ENCODE measurements at regions of chr3 and their contacts with region 1.

Region 1: DNA sequence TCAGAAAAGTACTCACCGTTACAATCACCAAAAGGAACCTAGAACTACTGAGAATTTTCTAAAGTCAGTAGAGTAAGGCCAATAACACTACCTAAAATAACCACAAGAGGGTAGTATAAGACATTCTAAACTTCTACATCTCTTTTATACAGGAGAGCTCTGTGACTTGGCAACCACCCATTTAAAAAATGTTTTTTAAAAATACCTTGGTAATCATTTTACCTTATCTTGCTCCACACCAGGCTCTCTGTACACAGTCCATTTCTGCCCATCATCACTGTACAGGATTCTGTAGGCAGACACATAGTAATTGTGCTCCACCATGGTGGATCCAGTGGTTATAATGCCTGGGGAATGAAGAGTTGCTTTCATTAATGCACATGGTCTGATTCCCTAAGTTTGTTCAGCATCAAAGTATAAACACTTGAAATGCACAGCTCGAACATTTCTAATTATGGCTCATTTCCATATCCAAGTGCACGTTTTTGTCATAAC is 54.5 kb downstream of the ST3GAL6 start:
- DNase-seq: peak; percentile 66
- H3K4me3 ChIP-seq: no peak overlapping the region
- H3K27ac ChIP-seq: peak overlapping the region; percentile 34
- H3K4me1 ChIP-seq: peaks cover 8% of the 10 kb centered on the region
- H3K27me3 ChIP-seq: no peaks in the 10 kb centered on the region
- CTCF ChIP-seq: peak; percentile 27 to 34
- POLR2A ChIP-seq: no peak

Region 2: DNA sequence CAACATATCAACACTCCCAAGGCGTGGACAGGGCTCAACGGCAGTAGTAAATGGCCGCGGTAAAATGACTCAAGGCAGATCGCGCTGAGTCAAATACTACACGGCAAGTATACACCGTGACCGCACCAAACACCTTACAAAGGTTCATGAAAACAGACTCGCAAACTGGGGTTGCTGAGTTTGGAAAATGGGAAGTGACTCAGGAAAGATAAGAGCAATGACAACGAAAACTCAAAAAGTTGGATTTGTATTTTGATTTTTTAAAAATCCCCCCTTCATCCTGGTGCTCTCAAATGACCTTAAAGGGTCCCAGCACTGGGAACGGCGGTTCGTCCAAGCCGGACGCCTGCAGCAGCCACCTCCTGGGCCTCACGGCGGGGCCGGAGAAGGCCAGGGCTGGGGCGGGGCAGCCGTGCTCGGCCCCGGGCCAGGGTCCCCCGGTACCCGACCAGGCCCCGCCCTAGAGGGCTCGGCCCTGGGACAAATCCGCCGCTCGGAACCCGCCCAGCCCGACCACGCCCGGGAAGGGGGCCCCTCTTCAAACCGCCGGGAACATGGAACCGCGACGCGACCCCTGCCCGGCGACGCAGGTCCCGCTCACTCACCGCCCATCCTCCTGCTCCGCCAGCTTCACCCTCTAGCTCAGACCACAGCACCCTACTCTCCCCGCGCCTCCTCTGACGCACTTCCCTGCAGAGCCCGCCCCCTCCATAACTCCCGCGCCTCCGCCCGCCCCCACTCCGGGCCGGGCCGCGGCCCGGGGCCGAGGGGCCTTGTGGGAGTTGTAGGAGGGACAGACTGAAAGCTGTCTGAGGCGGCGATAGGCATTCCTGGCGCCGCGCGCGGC is 295.1 kb before region 1 on chr3 and contains the start of gene CLDND1:
- CTCF ChIA-PET with region 1: no interaction called
- POLR2A ChIA-PET with region 1: no interaction called
- dilution Hi-C with region 1: no loop called
- intact Hi-C with region 1: loop called (anchors 5 kb)
- DNase-seq: peak; percentile 98
- H3K4me3 ChIP-seq: peak within 1 kb of the TSS; percentile 86 to 97 (median 94)
- H3K27ac ChIP-seq: peak within 1 kb of the TSS; percentile 94
- H3K4me1 ChIP-seq: peaks cover 13% of the 10 kb centered on the region
- H3K27me3 ChIP-seq: peaks cover 0 to 2% of the 10 kb centered on the region in 2 experiments
- CTCF ChIP-seq: no peak
- POLR2A ChIP-seq: peak; percentile 81
- total RNA-seq, gene CLDND1: 93.1 and 101 TPM in 2 replicates

Region 3: GRCh38 chr3:98593046-98593936 is 224.3 kb before region 1 on chr3 and contains the start of gene CPOX:
- CTCF ChIA-PET with region 1: interaction called, 63 read pairs
- POLR2A ChIA-PET with region 1: no interaction called
- dilution Hi-C with region 1: no loop called
- intact Hi-C with region 1: no loop called
- DNase-seq: peak; percentile 89
- H3K4me3 ChIP-seq: peak within 1 kb of the TSS; percentile 52 to 94 (median 76)
- H3K27ac ChIP-seq: peak within 1 kb of the TSS; percentile 49
- H3K4me1 ChIP-seq: peaks cover 10% of the 10 kb centered on the region
- H3K27me3 ChIP-seq: no peaks in the 10 kb centered on the region
- CTCF ChIP-seq: no peak
- POLR2A ChIP-seq: peak; percentile 44
- total RNA-seq, gene CPOX: 19.9 and 24.5 TPM in 2 replicates

Region 4: GRCh38 chr3:98893740-98894139 is 76.1 kb after region 1 on chr3:
- CTCF ChIA-PET with region 1: interaction called, 10 read pairs
- POLR2A ChIA-PET with region 1: no interaction called
- dilution Hi-C with region 1: no loop called
- intact Hi-C with region 1: no loop called
- DNase-seq: no peak
- H3K4me3 ChIP-seq: no peak overlapping the region
- H3K27ac ChIP-seq: no peak overlapping the region
- H3K4me1 ChIP-seq: peaks cover 51% of the 10 kb centered on the region
- H3K27me3 ChIP-seq: no peaks in the 10 kb centered on the region
- CTCF ChIP-seq: no peak
- POLR2A ChIP-seq: no peak

Region 5: DNA sequence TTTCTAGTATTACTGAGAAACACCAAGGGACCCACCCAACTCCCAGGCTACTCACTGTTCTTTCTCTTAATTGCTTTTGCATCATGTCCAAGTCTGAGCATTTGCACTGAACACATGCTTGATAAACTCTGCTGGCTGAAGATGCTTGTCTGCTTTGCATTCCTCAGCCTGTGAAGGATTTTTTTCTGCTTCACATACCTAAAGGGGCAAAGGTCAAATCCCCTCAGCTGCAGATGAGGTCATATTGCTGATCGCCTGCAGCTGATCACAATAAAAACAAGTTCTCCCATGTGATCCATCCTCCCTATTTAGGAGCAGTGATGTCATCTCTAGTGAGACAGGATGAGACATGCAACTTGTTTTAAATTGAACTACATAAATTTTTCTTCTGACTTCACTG is 168.5 kb after region 1 on chr3:
- CTCF ChIA-PET with region 1: interaction called, 361 read pairs
- POLR2A ChIA-PET with region 1: no interaction called
- dilution Hi-C with region 1: no loop called
- intact Hi-C with region 1: no loop called
- DNase-seq: peak; percentile 92
- H3K4me3 ChIP-seq: no peak overlapping the region
- H3K27ac ChIP-seq: peak overlapping the region; percentile 82
- H3K4me1 ChIP-seq: peaks cover 25% of the 10 kb centered on the region
- H3K27me3 ChIP-seq: no peaks in the 10 kb centered on the region
- CTCF ChIP-seq: no peak
- POLR2A ChIP-seq: no peak

Region 6: GRCh38 chr3:99753268-99753975 is 935.8 kb after region 1 on chr3:
- CTCF ChIA-PET with region 1: interaction called, 5 read pairs
- POLR2A ChIA-PET with region 1: no interaction called
- dilution Hi-C with region 1: no loop called
- intact Hi-C with region 1: loop called (anchors 1 kb)
- DNase-seq: peak; percentile 77
- H3K4me3 ChIP-seq: no peak overlapping the region
- H3K27ac ChIP-seq: peak overlapping the region; percentile 21
- H3K4me1 ChIP-seq: peaks cover 28% of the 10 kb centered on the region
- H3K27me3 ChIP-seq: no peaks in the 10 kb centered on the region
- CTCF ChIP-seq: peak; percentile 56 to 58
- POLR2A ChIP-seq: no peak